Transverse colon (tissue), 4 donors: ENCODE measurements at regions of chr1 and their contacts with region 1.

Region 1: DNA sequence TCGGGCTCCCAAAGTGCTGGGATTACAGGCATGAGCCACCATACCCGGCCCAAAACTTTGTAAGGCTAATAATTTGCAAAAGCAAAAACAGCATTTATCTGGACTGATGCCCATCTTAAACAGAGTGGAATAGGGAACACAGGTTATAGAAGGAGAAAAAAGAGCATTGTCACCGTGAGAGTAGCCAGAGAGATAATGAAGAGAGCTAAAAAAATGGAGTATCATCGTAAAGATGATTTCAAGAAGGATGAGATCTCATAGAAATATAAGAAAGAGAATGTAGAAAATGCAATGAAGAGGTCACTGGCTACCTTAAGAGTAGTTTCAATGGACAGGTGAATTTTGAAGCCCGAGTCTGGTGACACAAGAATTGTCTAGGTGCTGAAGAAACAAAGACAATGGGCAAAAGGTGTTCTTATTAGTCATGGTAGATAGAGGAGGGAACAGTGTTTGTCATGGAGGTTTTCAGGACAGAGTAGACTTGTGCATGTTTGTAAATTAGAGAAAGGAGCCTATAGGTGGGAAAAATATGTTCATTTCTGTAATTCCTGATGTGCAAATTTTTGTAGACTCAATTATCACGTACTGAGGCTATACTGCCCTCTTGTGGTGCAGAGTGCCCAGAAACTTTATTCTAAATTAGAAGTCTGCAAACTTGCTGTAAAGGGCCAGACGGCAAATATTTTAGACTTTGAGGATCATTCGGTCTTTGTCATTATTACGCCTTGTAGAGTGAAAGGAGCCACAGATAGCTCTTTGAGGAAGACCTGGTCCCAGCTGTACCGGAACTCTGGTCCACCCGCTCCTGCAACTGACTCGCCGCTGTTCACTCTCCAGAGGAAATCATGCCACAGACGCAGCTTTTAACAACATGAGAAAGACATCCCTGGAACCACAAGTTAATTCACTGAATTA is 8.1 kb upstream of the TMEM183A start:
- DNase-seq: peak; percentile 54
- H3K4me3 ChIP-seq: no peak overlapping the region
- H3K27ac ChIP-seq: no peak overlapping the region
- H3K4me1 ChIP-seq: peaks cover 0 to 7% (median 0%) of the 10 kb centered on the region in 4 donors
- H3K27me3 ChIP-seq: peaks cover 24% of the 10 kb centered on the region
- CTCF ChIP-seq: peak; percentile 68 to 87 (median 80)
- EP300 ChIP-seq: no peak
- POLR2A ChIP-seq: no peak

Region 2: GRCh38 chr1:202750758-202751157 is 248.3 kb before region 1 on chr1:
- in situ Hi-C with region 1: loop called in 1 of 4 experiments (anchors 25 kb)
- intact Hi-C with region 1: no loop called
- DNase-seq: no peak
- H3K4me3 ChIP-seq: no peak overlapping the region
- H3K27ac ChIP-seq: no peak overlapping the region
- H3K4me1 ChIP-seq: no peaks in the 10 kb centered on the region
- H3K27me3 ChIP-seq: no peaks in the 10 kb centered on the region
- CTCF ChIP-seq: peak in 2 of 5 experiments; percentile 5 to 13
- EP300 ChIP-seq: no peak
- POLR2A ChIP-seq: no peak

Region 3: DNA sequence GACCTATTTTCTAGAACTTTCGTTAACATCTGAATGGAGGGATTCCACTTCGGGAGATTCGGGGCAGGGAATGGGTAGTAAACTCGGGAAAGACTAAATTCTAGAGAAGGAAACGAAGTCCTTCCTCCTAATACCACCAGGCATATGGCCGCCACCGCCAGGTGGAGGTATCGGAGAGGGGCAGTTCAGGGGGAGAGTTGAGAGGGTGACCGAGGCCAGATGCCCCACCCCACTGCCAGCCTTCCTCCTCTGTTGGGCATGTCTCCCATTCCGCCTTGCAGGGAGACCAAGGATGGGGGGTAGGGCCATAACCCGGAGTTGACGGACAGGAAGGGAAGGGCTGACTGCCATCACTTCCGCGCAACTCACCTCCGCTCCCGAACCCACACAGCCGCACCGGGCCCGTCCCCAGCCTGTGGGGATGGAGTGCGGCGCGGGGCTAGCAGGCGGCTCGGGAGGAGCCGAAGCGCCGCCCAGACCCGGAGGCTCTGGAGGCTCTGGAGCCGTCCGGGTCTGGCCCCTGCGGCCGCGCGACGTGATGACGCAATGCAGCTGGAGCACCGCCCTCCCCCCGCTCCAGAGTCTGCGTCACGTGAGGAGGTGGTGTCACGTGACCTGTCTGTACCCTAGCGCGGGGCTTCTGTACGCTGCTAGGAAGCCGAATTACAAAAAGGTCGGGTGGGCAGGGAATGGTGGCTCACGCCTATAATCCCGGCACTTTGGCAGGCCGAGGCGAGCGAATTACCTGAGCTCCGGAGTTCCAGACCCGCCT is 72.2 kb before region 1 on chr1 and contains the start of gene KLHL12:
- in situ Hi-C with region 1: loop called in 2 of 4 experiments (anchors 10 kb)
- intact Hi-C with region 1: no loop called
- DNase-seq: peak; percentile 98
- H3K4me3 ChIP-seq: peak within 1 kb of the TSS; percentile 68 to 86 (median 76)
- H3K27ac ChIP-seq: peak within 1 kb of the TSS; percentile 91 to 96 (median 94)
- H3K4me1 ChIP-seq: peaks cover 4 to 36% (median 6%) of the 10 kb centered on the region in 4 donors
- H3K27me3 ChIP-seq: no peaks in the 10 kb centered on the region
- CTCF ChIP-seq: peak; percentile 58 to 92 (median 68)
- EP300 ChIP-seq: no peak
- POLR2A ChIP-seq: peak; percentile 95
- total RNA-seq, gene KLHL12: 10.5 to 26.6 (median 19.4) TPM